ENCODE measurements at regions of chr5 and their contacts with region 1.

Region 1: DNA sequence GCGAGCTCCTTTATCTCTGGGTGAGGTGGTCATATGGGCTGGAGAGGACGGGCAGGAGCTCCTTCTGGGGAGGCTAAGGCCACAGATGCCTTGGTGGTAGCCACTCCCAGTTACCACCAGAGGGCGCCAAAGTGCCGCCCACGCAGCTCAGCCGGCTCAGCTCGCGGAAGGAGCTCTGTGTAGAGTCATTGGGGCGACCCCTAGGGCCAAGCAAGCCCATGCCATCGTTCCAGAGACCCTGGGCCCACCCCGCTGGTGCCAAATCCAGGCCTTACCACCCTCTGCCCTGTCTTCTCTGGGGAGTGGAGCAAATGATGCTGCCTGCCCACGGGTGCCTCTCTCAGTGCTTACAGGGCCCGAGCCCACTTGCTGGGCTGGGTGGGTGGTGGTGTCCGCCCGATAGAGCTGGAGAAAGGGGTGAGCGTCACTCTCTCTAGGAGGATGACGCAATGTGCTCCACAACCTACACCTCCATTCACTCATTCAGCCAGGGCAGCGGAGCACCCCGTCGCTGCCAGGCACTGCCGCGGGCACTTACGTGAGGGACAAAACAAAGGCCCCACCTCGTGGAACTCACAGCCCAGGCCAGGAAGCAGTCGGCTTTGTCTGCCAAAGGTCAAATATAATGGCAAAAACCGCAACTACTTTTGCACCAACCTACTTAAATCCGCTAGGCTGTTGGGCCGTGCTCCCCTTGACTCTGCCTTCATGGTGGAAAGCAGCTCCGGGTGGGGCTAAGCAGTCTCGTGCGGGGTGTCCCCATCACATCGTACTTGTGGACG is 13.8 kb downstream of the TSPAN17 start:
- DNase-seq: peak; percentile 62
- ATAC-seq: peak; percentile 89
- H3K4me3 ChIP-seq: no peak overlapping the region
- H3K27ac ChIP-seq: no peak overlapping the region
- H3K4me1 ChIP-seq: no peaks in the 10 kb centered on the region
- H3K27me3 ChIP-seq: peaks cover 20% of the 10 kb centered on the region
- CTCF ChIP-seq: peak; percentile 95
- POLR2A ChIP-seq: no peak
- RAD21 ChIP-seq: peak; percentile 89

Region 2: DNA sequence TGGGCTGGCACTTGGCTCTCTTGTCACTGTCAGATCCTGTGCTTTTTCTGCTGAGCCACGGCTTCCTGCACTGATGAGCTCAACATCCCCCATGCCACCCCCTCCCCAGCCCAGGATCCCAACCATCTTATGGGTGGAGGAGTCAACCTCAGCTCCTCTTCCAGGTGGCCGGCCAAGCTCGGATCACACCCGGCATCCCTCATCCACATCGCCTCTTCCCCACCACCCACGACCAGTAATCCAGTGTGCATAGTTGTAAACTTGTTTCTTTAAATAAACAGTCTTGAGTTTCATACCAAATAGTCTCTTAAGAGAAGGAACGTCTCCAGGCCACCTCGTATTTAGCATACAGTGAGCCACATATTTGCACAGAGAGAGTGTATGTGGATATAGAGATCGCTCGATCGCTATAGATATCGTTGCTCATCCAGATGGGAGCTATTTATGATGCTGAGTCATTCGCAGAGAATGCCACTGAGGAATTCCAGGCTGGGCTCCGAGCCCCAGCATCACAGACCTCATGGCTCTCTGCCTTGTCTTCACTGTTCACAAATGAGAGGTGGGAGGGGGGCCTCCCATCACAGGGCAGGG is 851.4 kb before region 1 on chr5:
- CTCF ChIA-PET with region 1: no interaction called
- POLR2A ChIA-PET with region 1: no interaction called
- dilution Hi-C with region 1: no loop called
- in situ Hi-C with region 1: no loop called
- intact Hi-C with region 1: no loop called
- DNase-seq: peak; percentile 86
- ATAC-seq: peak; percentile 92
- H3K4me3 ChIP-seq: no peak overlapping the region
- H3K27ac ChIP-seq: no peak overlapping the region
- H3K4me1 ChIP-seq: peaks cover 8% of the 10 kb centered on the region; the same call in 1 of the 2 replicates
- H3K27me3 ChIP-seq: peaks cover 9% of the 10 kb centered on the region
- CTCF ChIP-seq: no peak
- POLR2A ChIP-seq: no peak
- RAD21 ChIP-seq: no peak

Region 3: GRCh38 chr5:176133289-176133870 is 527.7 kb before region 1 on chr5:
- CTCF ChIA-PET with region 1: no interaction called
- POLR2A ChIA-PET with region 1: no interaction called
- dilution Hi-C with region 1: no loop called
- in situ Hi-C with region 1: no loop called
- intact Hi-C with region 1: no loop called
- DNase-seq: no peak
- ATAC-seq: no peak
- H3K4me3 ChIP-seq: no peak overlapping the region
- H3K27ac ChIP-seq: no peak overlapping the region
- H3K4me1 ChIP-seq: no peaks in the 10 kb centered on the region
- H3K27me3 ChIP-seq: peaks cover 27% of the 10 kb centered on the region
- CTCF ChIP-seq: no peak
- POLR2A ChIP-seq: no peak
- RAD21 ChIP-seq: no peak

Region 4: GRCh38 chr5:176647030-176647866 is 13.8 kb before region 1 on chr5 and contains the start of gene TSPAN17:
- CTCF ChIA-PET with region 1: interaction called, 13 read pairs
- POLR2A ChIA-PET with region 1: no interaction called
- dilution Hi-C with region 1: no loop called
- in situ Hi-C with region 1: no loop called
- intact Hi-C with region 1: no loop called
- DNase-seq: peak; percentile 98
- ATAC-seq: peak; percentile 99
- H3K4me3 ChIP-seq: peak within 1 kb of the TSS; percentile 76
- H3K27ac ChIP-seq: peak within 1 kb of the TSS; percentile 51
- H3K4me1 ChIP-seq: peaks cover 10% of the 10 kb centered on the region; the same call in 1 of the 2 replicates
- H3K27me3 ChIP-seq: no peaks in the 10 kb centered on the region; the same call in 1 of the 2 replicates
- CTCF ChIP-seq: peak; percentile 64
- POLR2A ChIP-seq: peak; percentile 86
- RAD21 ChIP-seq: peak; percentile 70
- total RNA-seq, gene TSPAN17: 34.2 and 35.3 TPM in 2 replicates

Region 5: DNA sequence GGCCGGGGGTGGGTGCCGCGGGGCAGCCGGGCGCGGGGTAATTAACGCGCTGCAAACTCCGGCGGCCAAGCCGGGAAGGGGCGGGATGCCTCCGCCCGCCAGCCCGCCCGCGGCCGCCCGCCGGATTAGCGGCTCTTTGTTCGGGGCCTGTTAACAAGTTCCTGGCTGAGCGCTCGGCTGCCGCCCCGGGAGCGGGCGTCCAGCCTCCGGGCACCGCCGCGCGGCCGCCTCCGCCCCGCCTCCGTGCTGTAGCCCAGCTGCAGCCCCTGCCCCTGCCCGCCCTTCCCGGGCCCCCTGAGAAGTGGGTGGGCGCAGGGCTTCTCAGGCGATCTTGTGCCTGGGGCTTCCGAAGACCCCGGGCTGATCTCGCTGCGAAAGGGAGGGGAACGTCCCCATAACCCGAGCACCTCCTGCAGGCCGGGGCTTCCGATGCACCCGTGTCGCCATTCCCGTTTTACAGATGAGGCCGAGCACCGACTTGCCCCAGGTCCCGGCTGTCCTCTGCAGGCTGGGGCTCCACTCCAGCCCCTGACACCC is 156.9 kb after region 1 on chr5:
- CTCF ChIA-PET with region 1: no interaction called
- POLR2A ChIA-PET with region 1: no interaction called
- dilution Hi-C with region 1: no loop called
- in situ Hi-C with region 1: no loop called
- intact Hi-C with region 1: loop called (anchors 10 kb)
- DNase-seq: no peak
- ATAC-seq: peak; percentile 73
- H3K4me3 ChIP-seq: no peak overlapping the region; the same call in 1 of the 2 replicates
- H3K27ac ChIP-seq: no peak overlapping the region
- H3K4me1 ChIP-seq: no peaks in the 10 kb centered on the region
- H3K27me3 ChIP-seq: peaks cover 73% of the 10 kb centered on the region
- CTCF ChIP-seq: peak; percentile 29; the same call in 1 of the 2 replicates
- POLR2A ChIP-seq: no peak
- RAD21 ChIP-seq: no peak

Region 6: GRCh38 chr5:176959051-176959450 is 298.0 kb after region 1 on chr5:
- CTCF ChIA-PET with region 1: interaction called, 3 read pairs
- POLR2A ChIA-PET with region 1: no interaction called
- dilution Hi-C with region 1: no loop called
- in situ Hi-C with region 1: no loop called
- intact Hi-C with region 1: loop called (anchors 2 kb)
- DNase-seq: peak; percentile 29
- ATAC-seq: peak; percentile 56
- H3K4me3 ChIP-seq: no peak overlapping the region
- H3K27ac ChIP-seq: no peak overlapping the region
- H3K4me1 ChIP-seq: no peaks in the 10 kb centered on the region
- H3K27me3 ChIP-seq: no peaks in the 10 kb centered on the region
- CTCF ChIP-seq: peak; percentile 42
- POLR2A ChIP-seq: no peak
- RAD21 ChIP-seq: peak; percentile 55

Measured in IMR-90 (cell line).